ENCODE measurements at regions of chr5 and their contacts with region 1.

Region 1: GRCh38 chr5:82847562-82847961 is 229.6 kb downstream of the TMEM167A start:
- DNase-seq: no peak
- H3K4me3 ChIP-seq: no peak overlapping the region
- H3K27ac ChIP-seq: no peak overlapping the region
- H3K4me1 ChIP-seq: no peaks in the 10 kb centered on the region
- H3K27me3 ChIP-seq: no peaks in the 10 kb centered on the region
- CTCF ChIP-seq: no peak

Region 2: DNA sequence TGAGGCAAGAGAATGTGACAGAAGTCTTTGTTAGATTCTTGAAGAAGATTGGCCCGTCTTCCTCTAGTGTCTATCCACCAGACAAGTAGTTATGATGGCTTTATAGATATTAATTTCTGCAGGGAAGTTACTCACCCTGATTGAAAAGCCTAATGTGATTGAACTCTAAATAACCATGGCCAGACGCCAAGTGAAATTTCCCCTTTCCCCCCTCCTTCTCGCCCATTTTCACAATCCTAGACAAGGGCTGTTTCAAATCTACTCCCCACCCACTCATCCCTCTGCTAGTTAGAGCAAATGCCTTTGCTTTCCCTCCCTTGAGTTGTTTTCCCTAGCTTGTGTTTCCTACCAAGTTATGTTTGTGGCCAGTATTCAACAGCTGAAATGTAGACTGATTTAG is 47.2 kb after region 1 on chr5:
- CTCF ChIA-PET with region 1: no interaction called
- dilution Hi-C with region 1: loop called (anchors 5 kb)
- in situ Hi-C with region 1: no loop called
- intact Hi-C with region 1: no loop called
- DNase-seq: peak; percentile 11
- H3K4me3 ChIP-seq: no peak overlapping the region
- H3K27ac ChIP-seq: no peak overlapping the region
- H3K4me1 ChIP-seq: no peaks in the 10 kb centered on the region
- H3K27me3 ChIP-seq: no peaks in the 10 kb centered on the region
- CTCF ChIP-seq: no peak

Region 3: DNA sequence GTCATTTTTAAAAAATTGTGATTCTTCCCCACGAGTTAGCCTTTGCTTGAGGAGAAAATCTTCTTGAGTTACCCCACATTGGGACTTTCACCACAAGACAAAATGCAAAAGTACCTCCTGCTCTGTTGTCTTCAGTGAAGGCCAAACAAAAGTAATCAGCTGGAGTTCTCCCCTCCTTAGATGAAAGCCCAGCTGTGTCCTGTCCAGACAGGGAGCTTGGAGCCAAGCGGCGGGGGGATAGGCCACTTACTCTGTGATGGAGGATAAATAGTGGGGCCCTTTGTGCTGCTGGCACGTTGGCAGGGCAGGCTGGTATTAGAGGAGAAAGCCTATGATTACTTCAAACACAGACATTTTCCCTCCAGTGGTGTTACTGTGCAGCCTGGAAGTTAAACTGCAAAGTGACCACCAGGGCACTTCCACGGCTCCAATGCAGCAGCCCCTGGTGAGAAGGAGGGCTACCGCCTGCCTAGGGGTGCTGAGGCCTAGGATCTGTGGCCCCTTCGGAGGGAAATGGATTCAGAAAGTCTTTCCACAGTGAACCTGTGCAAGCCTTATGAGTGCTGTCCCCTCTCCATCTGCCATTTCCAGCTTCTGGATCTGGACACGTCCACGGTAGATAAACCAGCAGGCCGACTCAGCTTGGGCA is 74.6 kb after region 1 on chr5:
- CTCF ChIA-PET with region 1: no interaction called
- dilution Hi-C with region 1: loop called (anchors 5 kb)
- in situ Hi-C with region 1: no loop called
- intact Hi-C with region 1: no loop called
- DNase-seq: no peak
- H3K4me3 ChIP-seq: no peak overlapping the region
- H3K27ac ChIP-seq: no peak overlapping the region
- H3K4me1 ChIP-seq: no peaks in the 10 kb centered on the region
- H3K27me3 ChIP-seq: no peaks in the 10 kb centered on the region
- CTCF ChIP-seq: no peak

Measured in mammary epithelial cell (primary cell).